ENCODE measurements at regions of chr1 and their contacts with region 1.

Region 1: GRCh38 chr1:33072707-33073106 is 8.2 kb upstream of the AZIN2 start:
- DNase-seq: no peak
- H3K4me3 ChIP-seq: no peak overlapping the region
- H3K27ac ChIP-seq: no peak overlapping the region
- H3K4me1 ChIP-seq: no peaks in the 10 kb centered on the region
- H3K27me3 ChIP-seq: no peaks in the 10 kb centered on the region
- CTCF ChIP-seq: no peak

Region 2: DNA sequence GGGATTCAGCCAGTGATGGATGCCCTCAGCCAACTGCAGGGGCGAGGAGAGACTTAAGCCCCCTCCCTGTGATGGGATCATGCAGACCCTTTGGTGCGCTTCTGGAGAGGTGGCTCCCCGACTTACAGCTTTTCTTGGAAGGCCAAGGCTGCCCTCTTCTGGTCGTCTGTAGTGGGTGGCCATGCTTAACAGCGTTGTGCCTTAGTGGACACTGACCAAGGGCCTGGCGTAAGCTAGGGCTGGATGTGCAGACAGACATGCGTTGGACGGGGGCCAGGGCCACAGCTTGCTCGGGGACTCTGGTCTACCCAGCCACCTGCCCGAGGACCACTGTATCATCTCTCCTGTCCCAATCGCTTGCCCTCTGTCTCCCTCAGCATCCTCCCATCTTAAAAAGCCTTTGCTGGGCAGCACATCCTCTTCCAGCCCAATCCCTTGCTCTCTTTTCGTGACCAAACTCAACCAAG is 13.7 kb after region 1 on chr1:
- intact Hi-C with region 1: loop called (anchors 2 kb)
- DNase-seq: peak; percentile 66 to 79
- H3K4me3 ChIP-seq: no peak overlapping the region
- H3K27ac ChIP-seq: no peak overlapping the region
- H3K4me1 ChIP-seq: peaks cover 0 to 12% (median 10%) of the 10 kb centered on the region in 4 donors
- H3K27me3 ChIP-seq: no peaks in the 10 kb centered on the region
- CTCF ChIP-seq: peak; percentile 67

Measured in tibial artery (tissue), 4 donors.